HepG2 (cell line): ENCODE measurements at regions of chr1 and their contacts with region 1.

Region 1: GRCh38 chr1:168603501-168604110 is 27.2 kb downstream of the XCL1 start:
- DNase-seq: peak; percentile 60
- ATAC-seq: peak; percentile 99
- H3K4me3 ChIP-seq: no peak overlapping the region
- H3K27ac ChIP-seq: no peak overlapping the region
- H3K4me1 ChIP-seq: no peaks in the 10 kb centered on the region
- H3K27me3 ChIP-seq: no peaks in the 10 kb centered on the region; a peak in 1 of 5 replicates
- CTCF ChIP-seq: peak; percentile 96
- EP300 ChIP-seq: no peak
- POLR2A ChIP-seq: no peak
- RAD21 ChIP-seq: peak; percentile 96

Region 2: GRCh38 chr1:168834225-168834872 is 230.7 kb after region 1 on chr1:
- CTCF ChIA-PET with region 1: no interaction called
- POLR2A ChIA-PET with region 1: no interaction called
- in situ Hi-C with region 1: no loop called
- intact Hi-C with region 1: loop called (anchors 10 kb)
- DNase-seq: peak; percentile 96
- ATAC-seq: peak; percentile 91
- H3K4me3 ChIP-seq: peak overlapping the region; percentile 22 to 37 (median 29); a peak in 3 of 6 replicates
- H3K27ac ChIP-seq: peak overlapping the region; percentile 97
- H3K4me1 ChIP-seq: peaks cover 70% of the 10 kb centered on the region
- H3K27me3 ChIP-seq: no peaks in the 10 kb centered on the region
- CTCF ChIP-seq: no peak
- EP300 ChIP-seq: peak in 1 of 2 experiments; percentile 95; a peak in 2 of 4 replicates
- POLR2A ChIP-seq: peak; percentile 52 to 57; a peak in 2 of 4 replicates
- RAD21 ChIP-seq: 0 out of 2 replicates have a peak, but pooled peaks have one; percentile 3

Region 3: DNA sequence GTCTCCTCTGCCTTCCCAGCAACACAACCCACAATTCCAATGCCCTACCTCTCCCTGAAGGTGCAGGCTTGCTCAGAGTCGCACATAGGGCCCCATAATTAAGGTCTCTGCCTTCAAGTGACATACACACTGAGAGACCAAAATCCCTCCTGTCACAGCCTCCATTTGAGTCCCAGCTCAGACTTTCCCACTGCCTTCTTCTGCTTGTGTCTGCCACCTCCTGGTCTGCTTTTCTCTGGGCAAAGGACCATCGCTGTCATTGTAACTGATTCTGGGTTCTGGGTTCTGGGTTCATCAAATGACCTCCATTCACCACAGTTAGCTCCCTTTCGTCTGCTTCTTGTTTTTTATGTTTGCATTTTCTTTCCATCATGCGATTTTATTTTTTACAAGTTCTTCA is 383.7 kb after region 1 on chr1:
- CTCF ChIA-PET with region 1: no interaction called
- POLR2A ChIA-PET with region 1: no interaction called
- in situ Hi-C with region 1: no loop called
- intact Hi-C with region 1: loop called (anchors 1 kb)
- DNase-seq: no peak
- ATAC-seq: peak; percentile 66
- H3K4me3 ChIP-seq: no peak overlapping the region
- H3K27ac ChIP-seq: no peak overlapping the region
- H3K4me1 ChIP-seq: no peaks in the 10 kb centered on the region
- H3K27me3 ChIP-seq: no peaks in the 10 kb centered on the region
- CTCF ChIP-seq: peak; percentile 64
- EP300 ChIP-seq: no peak
- POLR2A ChIP-seq: no peak
- RAD21 ChIP-seq: no peak

Region 4: GRCh38 chr1:169367486-169368405 is 764.1 kb after region 1 on chr1 and contains the starts of genes BLZF1 and NME7:
- CTCF ChIA-PET with region 1: no interaction called
- POLR2A ChIA-PET with region 1: no interaction called
- in situ Hi-C with region 1: no loop called
- intact Hi-C with region 1: loop called (anchors 1 kb)
- DNase-seq: peak; percentile 94
- ATAC-seq: peak; percentile 99
- H3K4me3 ChIP-seq: peak within 1 kb of the TSS; percentile 85 to 93 (median 92)
- H3K27ac ChIP-seq: peak within 1 kb of the TSS; percentile 79
- H3K4me1 ChIP-seq: peaks cover 27% of the 10 kb centered on the region
- H3K27me3 ChIP-seq: no peaks in the 10 kb centered on the region; a peak in 2 of 5 replicates
- CTCF ChIP-seq: no peak
- EP300 ChIP-seq: no peak
- POLR2A ChIP-seq: peak in 1 of 2 experiments; percentile 55
- RAD21 ChIP-seq: no peak
- total RNA-seq, gene BLZF1: 13.7 and 18.7 TPM in 2 replicates
- total RNA-seq, gene NME7: 22.5 and 29.5 TPM in 2 replicates

Region 5: GRCh38 chr1:169466259-169467230 is 862.9 kb after region 1 on chr1:
- CTCF ChIA-PET with region 1: no interaction called
- POLR2A ChIA-PET with region 1: no interaction called
- in situ Hi-C with region 1: no loop called
- intact Hi-C with region 1: loop called (anchors 5 kb)
- DNase-seq: peak; percentile 24
- ATAC-seq: peak; percentile 69
- H3K4me3 ChIP-seq: no peak overlapping the region
- H3K27ac ChIP-seq: no peak overlapping the region
- H3K4me1 ChIP-seq: no peaks in the 10 kb centered on the region
- H3K27me3 ChIP-seq: no peaks in the 10 kb centered on the region
- CTCF ChIP-seq: peak; percentile 43
- EP300 ChIP-seq: no peak
- POLR2A ChIP-seq: no peak
- RAD21 ChIP-seq: peak; percentile 25; the same call in 1 of the 2 replicates

Region 6: DNA sequence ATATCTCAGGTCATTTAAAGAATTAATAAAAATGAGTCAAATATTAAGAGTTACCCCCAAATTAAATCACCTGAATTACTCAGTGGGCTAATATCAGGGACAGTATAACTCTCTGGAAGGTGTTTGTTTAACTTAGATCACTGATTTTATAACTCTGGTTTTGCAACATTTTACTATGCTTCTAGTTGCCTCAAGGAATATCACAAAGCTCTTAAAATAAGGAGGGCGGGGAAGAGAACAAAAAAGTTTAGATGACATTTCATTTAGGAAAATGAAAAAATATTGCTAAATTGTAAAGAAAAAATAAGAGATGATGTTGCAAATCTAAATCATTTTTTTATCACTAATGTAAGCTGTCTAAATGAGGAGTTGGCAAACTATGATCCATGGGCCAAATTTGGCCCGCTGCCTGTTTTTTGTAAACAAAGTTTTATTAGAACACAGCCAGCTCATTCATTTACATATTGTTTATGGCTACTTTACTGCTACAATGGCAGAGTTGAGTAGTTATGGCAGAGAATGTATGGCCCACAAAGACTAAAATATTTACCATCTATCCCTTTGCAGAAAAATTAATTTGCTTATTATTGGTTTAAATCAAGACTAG is 914.1 kb after region 1 on chr1:
- CTCF ChIA-PET with region 1: no interaction called
- POLR2A ChIA-PET with region 1: no interaction called
- in situ Hi-C with region 1: no loop called
- intact Hi-C with region 1: no loop called
- DNase-seq: no peak
- ATAC-seq: no peak
- H3K4me3 ChIP-seq: no peak overlapping the region
- H3K27ac ChIP-seq: no peak overlapping the region
- H3K4me1 ChIP-seq: peaks cover 14% of the 10 kb centered on the region
- H3K27me3 ChIP-seq: no peaks in the 10 kb centered on the region; a peak in 1 of 5 replicates
- CTCF ChIP-seq: no peak
- EP300 ChIP-seq: no peak
- POLR2A ChIP-seq: no peak
- RAD21 ChIP-seq: no peak